Transverse colon (tissue), 4 donors: ENCODE measurements at regions of chr7 and their contacts with region 1.

Region 1: GRCh38 chr7:102295693-102296376 is 9.2 kb downstream of the SH2B2 start:
- DNase-seq: no peak
- H3K4me3 ChIP-seq: no peak overlapping the region
- H3K27ac ChIP-seq: no peak overlapping the region
- H3K4me1 ChIP-seq: no peaks in the 10 kb centered on the region
- H3K27me3 ChIP-seq: no peaks in the 10 kb centered on the region
- CTCF ChIP-seq: no peak
- EP300 ChIP-seq: no peak
- POLR2A ChIP-seq: no peak

Region 2: DNA sequence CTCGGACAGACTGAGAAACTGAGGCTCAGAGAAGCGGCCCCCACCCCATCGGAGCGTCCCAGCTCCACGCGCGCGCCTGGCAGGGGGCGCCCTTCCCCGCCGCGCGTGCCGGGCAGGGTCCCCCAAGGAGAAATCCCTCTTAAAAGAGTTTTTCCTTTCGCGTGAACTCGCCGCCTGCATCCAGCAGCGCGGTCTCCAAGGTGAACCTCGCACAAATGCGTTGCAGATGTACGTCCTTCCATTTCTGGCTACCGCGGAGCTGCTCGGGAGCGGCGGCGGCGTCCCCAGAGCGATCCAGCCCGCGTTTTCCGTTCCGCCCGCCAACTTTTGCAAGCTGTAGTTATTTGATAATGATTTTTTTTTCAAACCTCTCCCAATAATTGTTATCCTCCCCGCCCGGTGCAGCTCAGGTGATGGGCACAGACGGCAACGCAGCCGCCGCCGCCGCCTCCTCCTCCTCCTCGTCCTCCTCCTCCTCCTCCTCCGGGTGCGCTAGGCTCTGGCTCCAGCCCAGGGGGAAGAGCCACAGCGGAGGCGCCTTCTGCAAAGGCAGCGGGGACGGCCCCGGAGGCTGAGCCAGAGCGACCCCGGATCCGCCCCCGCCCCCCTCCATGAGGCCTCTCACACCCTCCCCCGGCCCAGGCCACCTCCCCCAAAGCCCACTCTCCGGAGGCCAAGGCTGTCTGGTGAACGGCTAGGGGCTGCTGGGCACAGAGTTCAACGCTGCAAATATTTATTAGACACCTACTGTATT is 552.4 kb before region 1 on chr7:
- in situ Hi-C with region 1: no loop called
- intact Hi-C with region 1: loop called (anchors 1 kb)
- DNase-seq: peak; percentile 72
- H3K4me3 ChIP-seq: peak overlapping the region; percentile 28 to 62 (median 46)
- H3K27ac ChIP-seq: peak overlapping the region in 2 of 4 donors; percentile 5 to 31
- H3K4me1 ChIP-seq: peaks cover 6 to 13% (median 11%) of the 10 kb centered on the region in 4 donors
- H3K27me3 ChIP-seq: peaks cover 5% of the 10 kb centered on the region
- CTCF ChIP-seq: peak in 4 of 5 experiments; percentile 39 to 53 (median 51)
- EP300 ChIP-seq: no peak
- POLR2A ChIP-seq: no peak